Activated CD8-positive, alpha-beta T cell treated with anti-CD3 and anti-CD28 coated beads, Interleukin-2, amount 10 ng/mL, durations not matched to agents 7 days and 5 days (primary cell): ENCODE measurements at regions of chr4 and their contacts with region 1.

Region 1: DNA sequence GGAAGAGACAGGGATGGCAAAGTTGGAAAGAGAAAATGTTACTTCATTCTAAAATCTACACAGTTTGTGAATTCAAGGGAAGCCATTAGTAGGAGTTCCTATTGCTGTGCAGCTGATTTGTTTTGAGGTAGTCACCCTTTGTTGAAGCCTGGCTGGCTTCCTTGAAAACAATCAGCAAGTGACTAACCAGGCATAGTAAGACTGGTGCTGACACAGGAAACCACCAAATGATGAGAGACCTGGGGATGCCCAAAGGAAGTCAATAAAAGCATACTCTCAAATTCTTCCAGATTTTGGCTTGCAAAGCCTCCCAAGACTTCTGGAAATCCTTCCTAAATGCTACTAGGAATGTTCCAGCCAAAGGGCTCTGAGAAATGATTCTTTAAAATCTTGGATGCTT is 23.9 kb upstream of the PRDM8 start:
- DNase-seq: peak; percentile 73
- ATAC-seq: peak; percentile 94
- H3K4me3 Mint-ChIP-seq: peak overlapping the region; percentile 56
- H3K27ac Mint-ChIP-seq: peak overlapping the region; percentile 85
- H3K4me1 Mint-ChIP-seq: peaks cover 50% of the 10 kb centered on the region
- H3K27me3 Mint-ChIP-seq: no peaks in the 10 kb centered on the region

Region 2: GRCh38 chr4:80138551-80139538 is 34.6 kb before region 1 on chr4:
- CTCF ChIA-PET with region 1: interaction called, 28 read pairs
- POLR2A ChIA-PET with region 1: interaction called, 15 read pairs
- DNase-seq: peak; percentile 78
- ATAC-seq: peak; percentile 95
- H3K4me3 Mint-ChIP-seq: peak overlapping the region; percentile 6
- H3K27ac Mint-ChIP-seq: peak overlapping the region; percentile 81
- H3K4me1 Mint-ChIP-seq: peaks cover 52% of the 10 kb centered on the region
- H3K27me3 Mint-ChIP-seq: no peaks in the 10 kb centered on the region

Region 3: DNA sequence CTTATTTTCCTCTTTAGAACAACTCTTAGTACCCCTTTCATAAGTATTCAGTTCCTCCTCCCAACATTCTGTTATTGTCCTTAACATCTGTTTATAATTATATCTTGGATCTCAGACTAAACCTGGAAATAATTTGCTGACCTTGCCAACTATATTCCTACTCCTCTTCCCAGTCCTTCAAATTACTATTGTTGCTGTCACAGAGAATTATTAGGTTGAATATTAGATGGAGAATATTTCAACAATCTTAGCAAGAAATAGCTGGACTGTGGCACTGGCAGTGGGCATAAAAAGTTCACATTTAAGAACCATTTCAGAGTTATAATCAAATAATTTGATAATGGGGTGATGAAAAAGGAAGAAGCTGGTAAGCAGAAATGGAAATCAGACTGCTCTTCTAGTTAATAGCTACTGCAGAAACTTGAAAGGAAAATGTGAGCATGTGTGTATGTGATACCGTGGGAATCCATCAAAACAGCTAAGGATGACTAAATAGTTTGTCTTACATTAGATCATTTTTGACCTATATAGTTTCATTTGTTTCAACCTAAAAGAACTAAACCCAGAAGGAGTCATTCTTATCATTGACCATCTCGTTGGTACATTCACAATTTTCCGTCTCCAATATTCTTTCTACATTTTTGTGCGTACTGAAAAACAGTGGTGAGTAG is 19.4 kb before region 1 on chr4:
- CTCF ChIA-PET with region 1: interaction called, 22 read pairs
- POLR2A ChIA-PET with region 1: interaction called, 3 read pairs
- DNase-seq: no peak
- ATAC-seq: peak; percentile 27
- H3K4me3 Mint-ChIP-seq: no peak overlapping the region
- H3K27ac Mint-ChIP-seq: no peak overlapping the region
- H3K4me1 Mint-ChIP-seq: no peaks in the 10 kb centered on the region
- H3K27me3 Mint-ChIP-seq: no peaks in the 10 kb centered on the region